Astrocyte of the spinal cord (primary cell): ENCODE measurements at regions of chr9 and their contacts with region 1.

Region 1: DNA sequence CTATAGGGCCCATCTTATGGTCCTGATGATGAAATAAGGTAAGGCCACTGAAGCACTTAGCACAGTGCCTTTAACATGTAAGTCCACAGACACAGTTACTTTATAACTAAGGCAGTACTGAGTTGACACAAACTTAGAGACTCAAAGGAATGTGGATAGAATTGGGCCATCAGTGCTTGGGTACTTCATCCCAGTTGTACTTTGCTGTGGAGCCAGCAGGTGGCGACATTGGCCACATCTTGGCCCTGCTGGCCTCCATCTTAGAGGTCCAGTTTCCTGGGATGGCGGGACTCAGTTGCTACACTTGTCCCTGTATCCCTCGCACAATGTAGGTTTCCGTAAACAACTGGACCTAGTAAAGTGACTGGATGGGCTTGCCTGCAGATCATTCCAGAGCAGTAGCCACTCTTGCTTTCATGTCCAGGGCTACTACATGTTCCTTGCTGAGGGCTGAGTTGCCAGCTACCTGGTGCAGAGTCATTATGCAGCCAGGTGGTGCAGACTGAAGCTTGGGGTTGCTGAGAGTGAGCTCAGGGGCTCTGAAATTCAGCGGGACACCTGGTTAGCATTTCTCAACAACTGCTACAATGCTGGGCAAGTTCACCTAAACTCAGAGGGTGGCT is 10.6 kb downstream of the MTAP start:
- DNase-seq: peak; percentile 76
- H3K4me3 ChIP-seq: no peak overlapping the region
- CTCF ChIP-seq: peak; percentile 86

Region 2: DNA sequence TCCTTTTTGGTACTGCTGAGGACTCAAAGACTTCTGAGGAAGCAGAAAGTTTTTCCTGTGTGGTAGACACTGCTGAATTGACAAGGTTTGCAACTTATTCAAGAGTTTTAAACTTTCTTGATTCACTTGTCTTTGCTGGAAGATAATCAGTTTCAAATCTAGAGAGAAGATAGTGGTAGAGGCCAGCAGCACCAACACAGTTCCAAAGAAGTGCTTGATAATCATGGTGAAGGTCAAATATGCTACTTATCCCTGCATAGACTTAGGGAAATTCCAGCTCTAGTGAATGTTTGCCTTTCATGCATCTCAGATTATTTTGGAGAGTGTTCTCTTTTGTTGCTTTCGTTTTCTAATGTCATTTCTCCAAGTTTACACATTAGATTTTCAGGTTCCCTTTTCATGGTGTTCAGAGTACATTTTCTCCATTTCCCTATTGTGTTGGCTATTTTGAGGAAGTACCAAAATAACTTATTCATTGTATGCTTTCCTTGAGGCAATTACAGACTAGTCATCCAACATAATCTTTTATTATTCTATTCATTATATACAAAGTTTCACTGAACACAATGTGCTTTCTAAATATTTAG is 331.5 kb before region 1 on chr9:
- in situ Hi-C with region 1: no loop called
- DNase-seq: no peak
- H3K4me3 ChIP-seq: no peak overlapping the region
- CTCF ChIP-seq: no peak

Region 3: DNA sequence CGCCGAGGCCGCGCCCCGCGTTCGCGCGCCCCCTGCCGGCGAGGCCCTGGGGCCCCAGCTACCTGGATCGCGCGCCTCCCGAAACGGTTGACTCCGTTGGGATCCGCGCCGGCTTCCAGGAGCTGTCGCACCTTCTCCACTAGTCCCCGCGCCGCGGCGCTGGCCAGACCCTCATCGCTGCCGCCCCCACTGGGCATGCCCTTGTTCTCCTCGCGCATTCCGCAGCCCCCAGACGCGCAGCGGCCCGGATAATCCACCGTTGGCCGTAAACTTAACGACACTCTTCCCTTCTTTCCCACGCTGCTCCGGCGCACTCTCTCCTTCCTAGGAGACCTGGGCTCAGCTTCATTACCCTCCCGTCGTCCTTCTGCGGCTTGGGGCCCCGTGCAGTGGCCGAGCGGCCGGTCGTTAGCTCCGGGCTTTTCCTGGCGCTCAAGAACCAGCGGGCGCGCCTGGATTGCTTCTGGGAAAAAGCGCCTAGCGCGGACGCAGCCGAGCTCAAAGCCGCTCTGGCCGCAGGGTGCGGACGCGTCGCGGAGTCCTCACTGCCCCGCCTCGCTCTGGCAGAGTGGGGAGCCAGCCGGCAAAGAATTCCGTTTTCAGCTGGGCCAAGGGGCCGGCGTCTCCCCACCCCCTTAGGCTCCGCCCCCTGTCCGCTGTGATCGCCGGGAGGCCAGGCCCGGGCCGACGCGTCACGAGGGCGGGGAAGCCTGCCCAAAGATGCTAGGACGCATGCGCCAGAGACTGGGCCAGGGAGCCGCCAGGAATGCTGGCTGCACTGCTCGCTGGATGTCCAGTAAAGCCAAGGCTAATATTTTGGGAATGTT is 195.9 kb after region 1 on chr9 and contains the start of gene CDKN2B:
- in situ Hi-C with region 1: loop called (anchors 10 kb)
- DNase-seq: peak; percentile 97
- H3K4me3 ChIP-seq: peak within 1 kb of the TSS; percentile 93
- CTCF ChIP-seq: peak; percentile 77

Region 4: DNA sequence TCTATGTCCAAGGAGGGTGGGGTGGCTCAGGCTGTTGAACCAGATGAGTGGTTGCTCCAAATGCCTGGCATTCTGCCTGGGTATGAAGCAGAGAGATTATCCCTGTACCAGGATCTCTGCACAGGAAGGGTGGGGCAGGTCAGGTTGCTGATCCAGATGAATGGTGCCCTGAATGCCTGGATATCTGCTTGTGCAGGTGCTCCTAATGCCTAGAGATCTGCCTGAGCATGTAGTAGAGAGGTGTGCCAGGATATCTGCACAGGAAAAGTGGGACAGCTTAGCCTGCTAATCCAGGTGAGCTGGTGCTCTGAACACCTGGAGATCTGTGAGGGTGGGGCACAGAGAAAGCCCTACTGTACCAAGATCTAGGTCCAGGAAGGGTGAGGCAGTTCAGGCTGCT is 444.0 kb after region 1 on chr9:
- in situ Hi-C with region 1: no loop called
- DNase-seq: no peak
- H3K4me3 ChIP-seq: no peak overlapping the region
- CTCF ChIP-seq: no peak